T-cell (primary cell): ENCODE measurements at regions of chr1 and their contacts with region 1.

Region 1: DNA sequence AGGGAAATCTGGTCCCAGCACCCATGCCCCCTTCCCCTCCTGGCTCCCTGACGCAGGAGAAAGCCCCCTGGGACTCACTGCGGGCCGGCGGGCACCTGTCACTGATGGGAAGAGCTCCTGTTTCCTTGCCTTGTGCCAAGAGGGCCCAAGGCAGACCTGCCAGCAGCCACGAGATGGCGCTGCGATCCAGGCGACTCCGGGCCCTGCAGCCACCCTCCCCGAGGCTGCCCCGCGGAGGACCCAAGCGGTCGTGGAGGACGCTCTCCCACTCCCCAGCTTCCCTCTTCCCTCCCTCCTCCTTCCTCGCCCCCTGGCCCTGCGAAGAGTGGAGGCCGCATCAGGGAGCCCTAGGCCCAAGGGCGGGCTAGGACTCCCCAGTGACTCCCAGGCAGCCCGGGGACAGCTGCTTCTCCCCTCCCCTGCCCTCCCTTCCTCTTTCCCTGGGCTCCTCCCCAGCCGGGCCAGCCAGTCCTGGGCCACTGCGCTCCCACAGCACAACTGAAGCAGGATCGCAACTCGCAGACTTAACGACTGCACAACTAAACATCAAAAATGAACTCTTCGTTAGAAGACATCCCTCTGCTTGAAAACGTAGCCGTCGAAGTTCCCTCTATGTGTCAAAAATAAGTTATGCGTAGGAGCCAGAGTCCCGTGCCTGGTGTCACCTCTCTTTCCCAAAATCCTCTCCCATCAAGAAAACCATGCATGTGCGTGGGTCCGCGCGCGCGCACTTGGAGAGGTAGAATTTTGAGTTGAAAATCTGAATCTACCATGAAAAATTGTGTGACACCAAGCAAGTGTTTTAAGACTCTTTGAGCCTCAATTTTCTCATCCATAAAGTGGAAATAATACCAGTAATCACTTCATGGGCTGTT is 34.2 kb downstream of the BATF3 start:
- DNase-seq: peak; percentile 40 to 85 (median 68)
- ATAC-seq: peak; percentile 96 to 97 (median 97)
- H3K4me3 ChIP-seq: peak overlapping the region; percentile 43 to 55
- H3K4me3 Mint-ChIP-seq: peak overlapping the region; percentile 68 to 79 (median 77)
- H3K27ac ChIP-seq: no peak overlapping the region
- H3K27ac Mint-ChIP-seq: no peak overlapping the region
- H3K4me1 ChIP-seq: peaks cover 0 to 16% of the 10 kb centered on the region in 2 experiments
- H3K4me1 Mint-ChIP-seq: peaks cover 4 to 7% (median 7%) of the 10 kb centered on the region in 3 donors
- H3K27me3 ChIP-seq: peaks cover 0 to 12% of the 10 kb centered on the region in 2 experiments
- H3K27me3 Mint-ChIP-seq: peaks cover 4 to 6% of the 10 kb centered on the region in 2 donors

Region 2: DNA sequence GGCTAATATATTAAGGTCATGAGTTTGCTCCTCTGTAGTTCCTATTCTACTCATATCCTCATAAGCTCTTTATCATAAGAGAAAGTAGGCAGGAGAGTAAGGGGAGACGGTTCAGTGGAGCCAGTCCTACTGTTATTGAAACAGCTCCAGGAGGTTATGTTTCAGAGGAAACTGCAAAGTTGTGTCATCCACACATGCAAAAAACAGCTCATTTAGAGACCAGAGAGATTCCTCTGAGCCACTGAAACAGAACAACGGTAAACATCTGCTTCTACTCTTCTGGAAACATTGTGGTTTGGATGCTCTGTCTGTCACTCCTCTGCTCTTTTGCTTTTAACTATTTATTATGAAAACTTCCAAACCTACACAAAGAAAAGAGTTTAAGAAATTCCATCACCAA is 446.6 kb before region 1 on chr1:
- CTCF ChIA-PET with region 1: no interaction called
- POLR2A ChIA-PET with region 1: no interaction called
- DNase-seq: no peak
- ATAC-seq: no peak
- H3K4me3 ChIP-seq: no peak overlapping the region
- H3K4me3 Mint-ChIP-seq: no peak overlapping the region
- H3K27ac ChIP-seq: no peak overlapping the region
- H3K27ac Mint-ChIP-seq: no peak overlapping the region
- H3K4me1 ChIP-seq: peaks cover 0 to 3% of the 10 kb centered on the region in 2 experiments
- H3K4me1 Mint-ChIP-seq: peaks cover 9 to 24% (median 10%) of the 10 kb centered on the region in 3 donors
- H3K27me3 ChIP-seq: no peaks in the 10 kb centered on the region
- H3K27me3 Mint-ChIP-seq: peaks cover 0 to 9% of the 10 kb centered on the region in 2 donors

Region 3: DNA sequence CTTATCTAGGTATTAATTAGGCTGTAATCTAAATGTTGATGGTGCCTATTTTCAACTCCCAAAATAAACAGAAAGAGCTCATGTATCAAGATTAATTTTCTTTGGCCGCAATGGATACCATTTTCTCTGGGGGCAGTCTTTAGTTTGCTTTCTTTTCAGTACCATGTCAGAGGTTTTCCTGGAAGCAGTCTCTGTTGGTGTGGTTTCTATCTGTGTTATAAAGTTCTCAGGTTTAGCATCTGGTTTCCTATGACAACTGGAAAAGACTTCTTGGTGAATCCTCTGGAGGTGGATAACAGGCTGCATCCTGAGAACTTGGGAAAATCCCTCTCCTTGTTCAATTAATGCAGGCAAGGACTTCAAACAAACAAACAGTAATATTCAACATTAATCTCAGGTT is 72.9 kb after region 1 on chr1:
- CTCF ChIA-PET with region 1: no interaction called
- POLR2A ChIA-PET with region 1: no interaction called
- DNase-seq: no peak
- ATAC-seq: no peak
- H3K4me3 ChIP-seq: no peak overlapping the region
- H3K4me3 Mint-ChIP-seq: no peak overlapping the region
- H3K27ac ChIP-seq: no peak overlapping the region
- H3K27ac Mint-ChIP-seq: no peak overlapping the region
- H3K4me1 ChIP-seq: peaks cover 0 to 5% of the 10 kb centered on the region in 2 experiments
- H3K4me1 Mint-ChIP-seq: peaks cover 6 to 17% (median 12%) of the 10 kb centered on the region in 3 donors
- H3K27me3 ChIP-seq: no peaks in the 10 kb centered on the region
- H3K27me3 Mint-ChIP-seq: no peaks in the 10 kb centered on the region

Region 4: GRCh38 chr1:212782422-212783154 is 117.1 kb after region 1 on chr1:
- CTCF ChIA-PET with region 1: interaction called, 13 to 21 read pairs
- POLR2A ChIA-PET with region 1: no interaction called
- DNase-seq: peak in 1 of 35 experiments; percentile 55
- ATAC-seq: peak in 3 of 4 experiments; percentile 58 to 62 (median 58)
- H3K4me3 ChIP-seq: no peak overlapping the region
- H3K4me3 Mint-ChIP-seq: no peak overlapping the region
- H3K27ac ChIP-seq: no peak overlapping the region
- H3K27ac Mint-ChIP-seq: no peak overlapping the region
- H3K4me1 ChIP-seq: no peaks in the 10 kb centered on the region
- H3K4me1 Mint-ChIP-seq: peaks cover 0 to 10% (median 8%) of the 10 kb centered on the region in 3 donors
- H3K27me3 ChIP-seq: no peaks in the 10 kb centered on the region
- H3K27me3 Mint-ChIP-seq: no peaks in the 10 kb centered on the region

Region 5: DNA sequence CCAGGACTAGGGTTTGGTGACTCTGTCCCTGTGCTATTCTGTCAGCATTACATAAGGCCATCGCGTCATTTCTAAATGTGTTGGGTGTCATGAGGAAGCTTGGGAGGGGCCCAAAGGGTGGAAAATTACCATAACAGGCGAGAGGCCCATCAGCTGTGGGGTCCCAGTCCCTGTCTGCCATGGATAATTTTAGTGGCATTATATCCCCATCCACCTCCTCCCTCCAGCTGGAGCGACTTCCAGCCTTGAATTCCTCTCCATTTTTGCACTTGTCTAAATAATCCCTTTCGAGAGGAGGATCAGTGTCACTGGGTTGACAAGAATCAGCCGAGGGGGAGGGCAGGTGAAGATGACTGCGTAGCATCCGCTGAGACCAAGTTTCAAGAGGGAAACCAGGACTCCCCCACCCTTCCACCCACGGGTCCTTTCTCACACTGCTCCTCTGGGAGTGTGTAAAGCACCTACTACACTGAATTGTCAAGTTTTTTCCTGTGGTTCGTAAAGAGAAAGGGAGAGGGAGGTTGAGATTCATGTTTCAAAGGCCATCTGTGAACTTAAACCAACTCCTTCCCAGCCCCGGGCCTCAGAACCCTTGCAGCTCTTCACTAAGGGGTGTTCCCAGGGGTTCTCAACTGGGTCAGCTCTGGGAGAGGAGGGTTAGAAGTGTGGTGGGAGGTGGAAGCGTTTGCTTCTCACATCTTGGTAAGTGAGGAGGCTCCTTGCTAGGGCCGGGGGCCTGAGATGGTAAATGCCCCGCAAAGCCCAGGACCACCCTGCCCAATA is 314.1 kb after region 1 on chr1:
- CTCF ChIA-PET with region 1: no interaction called
- POLR2A ChIA-PET with region 1: no interaction called
- DNase-seq: peak in 2 of 35 experiments; percentile 1 to 14
- ATAC-seq: no peak
- H3K4me3 ChIP-seq: no peak overlapping the region
- H3K4me3 Mint-ChIP-seq: no peak overlapping the region
- H3K27ac ChIP-seq: no peak overlapping the region
- H3K27ac Mint-ChIP-seq: no peak overlapping the region
- H3K4me1 ChIP-seq: peaks cover 0 to 23% of the 10 kb centered on the region in 2 experiments
- H3K4me1 Mint-ChIP-seq: peaks cover 0 to 19% (median 7%) of the 10 kb centered on the region in 3 donors
- H3K27me3 ChIP-seq: peaks cover 0 to 22% of the 10 kb centered on the region in 2 experiments
- H3K27me3 Mint-ChIP-seq: peaks cover 3% of the 10 kb centered on the region in 2 donors

Region 6: DNA sequence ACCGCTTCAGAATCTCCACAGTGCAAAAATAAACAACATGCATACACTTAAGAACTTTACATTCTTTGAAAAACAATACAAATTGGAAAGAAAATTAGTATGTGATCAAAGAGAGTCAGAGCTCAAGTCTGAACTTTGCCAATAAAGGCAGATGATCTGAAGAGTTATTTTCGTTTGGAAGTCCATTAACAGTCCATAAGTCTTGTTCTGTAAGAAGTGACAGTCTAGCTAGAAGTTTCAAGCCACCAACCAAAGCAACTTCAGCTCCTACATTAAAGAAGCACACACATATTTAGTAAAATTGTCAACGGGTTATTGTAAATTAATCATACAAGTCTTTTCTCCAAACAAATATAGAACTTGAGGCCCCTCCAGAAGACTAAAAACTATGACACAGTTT is 329.4 kb after region 1 on chr1:
- CTCF ChIA-PET with region 1: interaction called, 16 read pairs
- POLR2A ChIA-PET with region 1: no interaction called
- DNase-seq: no peak
- ATAC-seq: no peak
- H3K4me3 ChIP-seq: no peak overlapping the region
- H3K4me3 Mint-ChIP-seq: no peak overlapping the region
- H3K27ac ChIP-seq: no peak overlapping the region
- H3K27ac Mint-ChIP-seq: no peak overlapping the region
- H3K4me1 ChIP-seq: no peaks in the 10 kb centered on the region
- H3K4me1 Mint-ChIP-seq: peaks cover 3 to 9% (median 4%) of the 10 kb centered on the region in 3 donors
- H3K27me3 ChIP-seq: no peaks in the 10 kb centered on the region
- H3K27me3 Mint-ChIP-seq: no peaks in the 10 kb centered on the region